HepG2 (cell line): ENCODE measurements at regions of chr16 and their contacts with region 1.

Region 1: GRCh38 chr16:29825145-29826044 is 5.1 kb downstream of the MVP start:
- DNase-seq: no peak
- ATAC-seq: peak; percentile 2; the same call in 2 of the 3 replicates
- H3K4me3 ChIP-seq: no peak overlapping the region
- H3K27ac ChIP-seq: peak overlapping the region; percentile 16
- H3K4me1 ChIP-seq: peaks cover 100% of the 10 kb centered on the region
- H3K27me3 ChIP-seq: no peaks in the 10 kb centered on the region
- CTCF ChIP-seq: no peak
- EP300 ChIP-seq: no peak
- POLR2A ChIP-seq: no peak
- RAD21 ChIP-seq: no peak

Region 2: DNA sequence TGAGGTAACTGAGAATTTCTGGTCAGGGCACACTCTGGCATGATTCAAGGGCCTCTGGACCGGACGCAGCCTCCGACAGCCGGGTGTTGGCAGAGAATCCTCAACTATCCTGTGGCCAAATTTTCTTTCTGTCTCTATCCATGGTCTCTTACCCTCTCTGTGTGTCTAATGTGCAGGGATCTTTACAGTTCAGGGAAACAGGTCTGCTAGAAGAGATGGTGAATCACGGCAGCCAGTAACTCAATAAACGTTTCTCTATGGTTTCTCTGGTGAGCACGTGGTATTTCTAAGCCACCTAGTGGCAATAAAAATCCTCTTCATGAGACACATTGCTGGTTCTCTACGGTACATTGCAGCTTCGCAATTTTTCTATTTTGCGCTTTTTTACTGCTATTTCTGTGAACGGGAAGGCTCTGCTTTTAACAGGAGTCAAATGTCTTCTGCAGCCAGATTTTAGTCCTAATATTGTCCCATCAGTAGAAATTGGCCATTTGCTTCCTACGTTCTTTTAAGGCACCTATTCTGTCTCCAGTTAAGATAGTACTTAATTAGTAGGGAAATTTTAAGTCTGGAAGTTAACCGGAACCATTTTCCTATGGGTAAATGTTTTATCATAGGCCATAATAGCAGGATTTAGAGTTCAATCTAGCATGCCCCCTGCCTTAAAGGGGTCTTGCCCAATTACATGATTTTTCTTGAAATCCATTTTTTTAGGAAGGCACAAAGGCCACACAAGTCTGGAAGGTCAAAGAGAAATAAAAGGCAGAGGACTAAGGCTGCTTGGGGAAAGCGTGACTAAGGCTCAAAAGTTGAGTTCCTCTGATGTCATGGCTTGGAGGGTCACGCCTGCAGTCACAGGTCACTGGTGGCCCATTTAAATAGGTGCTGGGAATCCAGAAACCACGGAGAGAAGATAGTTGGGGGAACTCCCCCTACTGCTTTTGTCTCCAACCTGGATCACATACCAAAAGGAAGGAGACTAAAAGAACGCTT is 114.9 kb before region 1 on chr16:
- CTCF ChIA-PET with region 1: no interaction called
- POLR2A ChIA-PET with region 1: no interaction called
- in situ Hi-C with region 1: no loop called
- intact Hi-C with region 1: no loop called
- DNase-seq: peak; percentile 75
- ATAC-seq: peak; percentile 94
- H3K4me3 ChIP-seq: no peak overlapping the region
- H3K27ac ChIP-seq: no peak overlapping the region
- H3K4me1 ChIP-seq: peaks cover 32% of the 10 kb centered on the region
- H3K27me3 ChIP-seq: peaks cover 0 to 3% of the 10 kb centered on the region in 2 experiments; a peak in 1 of 5 replicates
- CTCF ChIP-seq: peak; percentile 81
- EP300 ChIP-seq: no peak
- POLR2A ChIP-seq: no peak
- RAD21 ChIP-seq: peak; percentile 44

Region 3: DNA sequence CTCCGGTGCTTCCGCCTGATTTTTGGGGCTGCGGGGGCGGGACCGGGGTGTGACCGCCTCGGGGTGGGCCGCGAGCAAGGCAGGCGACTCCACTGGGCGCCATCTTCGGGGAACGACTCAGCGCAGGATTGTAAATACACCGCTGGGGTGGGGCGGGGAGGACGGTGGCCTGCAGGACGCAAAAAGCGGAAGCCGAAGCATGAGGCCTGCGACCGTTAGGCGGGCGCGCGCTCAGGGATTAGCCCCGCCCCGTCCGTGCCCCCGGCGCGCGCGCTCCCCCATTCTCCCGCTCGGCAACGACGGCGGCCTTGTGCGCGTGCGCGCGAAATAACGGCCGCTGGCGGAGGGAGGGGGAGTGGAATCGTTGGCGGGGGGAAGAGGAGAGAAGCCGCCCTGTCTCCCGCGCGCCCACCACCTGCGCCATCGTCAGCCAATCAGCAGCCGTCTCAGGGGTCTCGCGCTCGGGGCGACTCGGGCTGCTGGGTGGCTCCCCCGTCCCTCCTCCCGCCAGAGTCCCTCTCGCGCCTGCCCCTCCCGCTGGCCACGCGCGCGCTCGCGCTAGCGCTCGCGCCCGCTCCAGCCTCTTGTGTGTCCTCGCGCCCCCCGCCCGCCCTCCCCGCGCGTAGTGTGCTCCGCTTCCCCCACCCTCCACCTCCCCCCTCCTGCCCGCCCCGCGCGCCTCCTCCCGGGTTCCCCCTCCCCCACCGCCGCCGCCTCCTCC is 19.9 kb before region 1 on chr16:
- CTCF ChIA-PET with region 1: no interaction called
- POLR2A ChIA-PET with region 1: interaction called, 56 read pairs
- in situ Hi-C with region 1: no loop called
- intact Hi-C with region 1: no loop called
- DNase-seq: peak; percentile 97
- ATAC-seq: peak; percentile 78
- H3K4me3 ChIP-seq: peak overlapping the region; percentile 59 to 85 (median 77)
- H3K27ac ChIP-seq: peak overlapping the region; percentile 88
- H3K4me1 ChIP-seq: peaks cover 50% of the 10 kb centered on the region
- H3K27me3 ChIP-seq: no peaks in the 10 kb centered on the region
- CTCF ChIP-seq: peak; percentile 36
- EP300 ChIP-seq: peak in 1 of 2 experiments; percentile 64; a peak in 1 of 4 replicates
- POLR2A ChIP-seq: peak in 1 of 2 experiments; percentile 82; a peak in 2 of 4 replicates
- RAD21 ChIP-seq: peak; percentile 66

Region 4: GRCh38 chr16:29842732-29843346 is 17.4 kb after region 1 on chr16:
- CTCF ChIA-PET with region 1: interaction called, 12 read pairs
- POLR2A ChIA-PET with region 1: interaction called, 25 read pairs
- in situ Hi-C with region 1: no loop called
- intact Hi-C with region 1: no loop called
- DNase-seq: no peak
- ATAC-seq: peak; percentile 52
- H3K4me3 ChIP-seq: no peak overlapping the region
- H3K27ac ChIP-seq: no peak overlapping the region
- H3K4me1 ChIP-seq: no peaks in the 10 kb centered on the region
- H3K27me3 ChIP-seq: no peaks in the 10 kb centered on the region
- CTCF ChIP-seq: peak; percentile 26; the same call in 1 of the 2 replicates
- EP300 ChIP-seq: no peak
- POLR2A ChIP-seq: no peak
- RAD21 ChIP-seq: no peak

Region 5: DNA sequence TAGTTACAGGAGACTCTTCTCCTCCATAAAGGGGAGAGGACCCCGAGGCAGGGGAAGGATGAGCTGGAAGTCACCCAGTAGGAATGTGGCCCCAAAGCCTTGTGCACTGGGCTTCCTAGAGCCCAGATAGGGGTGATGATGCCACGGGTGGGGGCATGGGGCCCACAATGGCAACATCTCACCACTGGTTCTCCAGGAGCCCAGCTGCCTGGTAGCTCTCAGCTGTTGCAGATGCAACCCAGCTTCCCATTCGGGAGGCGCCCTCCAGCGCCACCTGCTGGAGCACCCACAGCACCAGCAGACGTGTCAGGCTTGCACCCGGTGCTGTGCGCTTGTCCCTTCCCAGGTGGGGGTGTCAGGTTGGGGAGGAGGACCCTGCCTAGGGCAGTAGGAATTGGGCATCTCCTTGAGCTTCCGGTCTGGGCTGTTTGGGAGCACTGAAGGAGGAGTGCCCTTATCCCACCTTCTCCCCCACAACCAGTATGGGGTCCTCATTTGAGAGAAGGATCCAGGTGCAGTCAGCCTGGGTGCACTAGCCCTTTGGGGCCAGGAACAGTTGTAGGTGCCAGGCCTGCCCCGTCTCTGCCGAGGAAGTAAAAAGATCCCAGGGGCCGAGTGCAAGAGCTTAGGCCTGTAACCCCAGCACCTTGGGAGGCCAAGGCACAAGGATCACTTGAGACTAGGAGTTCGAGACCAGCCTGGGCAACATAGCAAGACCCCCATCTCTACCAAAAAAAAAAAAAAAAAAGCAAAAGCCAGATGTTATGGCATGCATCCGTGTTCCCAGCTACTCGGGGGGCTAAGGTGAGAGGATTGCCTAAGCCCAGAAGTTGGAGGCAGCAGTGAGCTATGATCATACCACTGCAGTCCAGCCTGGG is 23.3 kb after region 1 on chr16:
- CTCF ChIA-PET with region 1: interaction called, 12 read pairs
- POLR2A ChIA-PET with region 1: interaction called, 25 read pairs
- in situ Hi-C with region 1: no loop called
- intact Hi-C with region 1: no loop called
- DNase-seq: peak; percentile 65
- ATAC-seq: peak; percentile 90
- H3K4me3 ChIP-seq: no peak overlapping the region
- H3K27ac ChIP-seq: no peak overlapping the region
- H3K4me1 ChIP-seq: no peaks in the 10 kb centered on the region
- H3K27me3 ChIP-seq: no peaks in the 10 kb centered on the region
- CTCF ChIP-seq: peak; percentile 99
- EP300 ChIP-seq: no peak
- POLR2A ChIP-seq: no peak
- RAD21 ChIP-seq: peak; percentile 98

Region 6: DNA sequence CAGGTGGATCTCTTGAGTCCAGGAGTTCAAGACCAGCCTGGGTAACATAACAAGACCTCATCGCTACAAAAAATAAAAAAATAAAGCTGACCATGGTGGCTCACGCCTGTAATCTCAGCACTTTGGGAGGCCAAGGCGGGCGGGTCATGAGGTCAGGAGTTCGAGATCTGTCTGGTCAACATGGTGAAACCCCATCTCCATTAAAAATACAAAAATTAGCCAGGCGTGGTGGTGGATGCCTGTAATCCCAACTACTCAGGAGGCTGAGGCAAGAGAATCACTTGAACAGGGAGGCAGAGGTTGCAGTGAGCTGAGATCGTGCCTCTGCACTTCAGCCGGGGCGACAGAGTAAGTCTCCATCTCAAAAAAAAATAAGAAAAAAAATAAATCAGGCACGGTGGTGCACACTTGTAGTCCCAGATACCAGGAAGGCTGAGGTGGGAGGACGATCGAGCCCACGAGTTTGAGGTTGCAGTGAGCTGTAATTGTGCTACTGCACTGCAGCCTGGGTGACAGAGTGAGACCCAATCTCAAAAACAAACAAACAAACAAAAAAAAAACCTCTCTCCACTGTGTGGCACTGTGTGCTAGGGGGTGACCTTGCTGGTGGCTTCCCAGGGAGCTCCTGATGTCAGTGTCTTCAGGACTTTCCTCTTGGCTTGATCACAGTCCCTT is 317.4 kb after region 1 on chr16:
- CTCF ChIA-PET with region 1: no interaction called
- POLR2A ChIA-PET with region 1: no interaction called
- in situ Hi-C with region 1: no loop called
- intact Hi-C with region 1: no loop called
- DNase-seq: peak; percentile 61
- ATAC-seq: peak; percentile 26
- H3K4me3 ChIP-seq: no peak overlapping the region; a peak in 2 of 6 replicates
- H3K27ac ChIP-seq: no peak overlapping the region
- H3K4me1 ChIP-seq: peaks cover 66% of the 10 kb centered on the region
- H3K27me3 ChIP-seq: no peaks in the 10 kb centered on the region
- CTCF ChIP-seq: peak; percentile 85
- EP300 ChIP-seq: no peak
- POLR2A ChIP-seq: no peak
- RAD21 ChIP-seq: no peak